CD4-positive, alpha-beta memory T cell (primary cell): ENCODE measurements at regions of chr1 and their contacts with region 1.

Region 1: DNA sequence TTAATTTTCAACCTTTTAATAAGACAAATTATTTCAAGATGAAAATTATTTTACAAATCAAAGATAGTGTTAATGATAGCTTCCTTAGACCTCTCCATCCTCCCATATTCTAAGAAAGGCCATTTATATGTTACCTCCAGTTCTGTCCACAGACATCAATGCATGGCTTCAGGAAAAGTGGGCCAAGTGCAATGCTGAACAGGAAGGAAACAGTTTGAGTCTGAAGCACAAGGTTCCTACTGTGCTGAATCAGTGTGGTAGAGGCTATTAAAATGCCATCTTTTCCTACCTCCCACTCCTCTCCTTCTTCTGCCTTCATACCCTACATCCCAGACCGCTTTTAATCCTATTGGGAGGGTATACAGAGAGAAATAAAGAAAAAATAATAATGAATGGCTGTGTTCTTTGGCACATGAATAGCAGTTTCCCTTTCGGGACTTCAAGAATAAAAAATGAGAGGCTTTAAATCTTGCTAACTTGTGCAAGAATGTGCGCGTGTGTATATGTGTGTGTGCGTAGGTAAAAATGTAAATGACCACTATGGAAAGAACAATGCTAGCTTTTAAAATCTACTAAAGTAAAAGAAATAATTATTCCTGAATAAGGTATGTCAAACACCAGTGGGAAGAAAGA is 62.6 kb upstream of the C1orf105 start:
- DNase-seq: no peak
- H3K4me3 ChIP-seq: no peak overlapping the region
- H3K4me3 Mint-ChIP-seq: peak overlapping the region; percentile 62 to 84 (median 74)
- H3K27ac ChIP-seq: peak overlapping the region; percentile 56
- H3K27ac Mint-ChIP-seq: peak overlapping the region in 6 of 7 donors; percentile 73 to 95 (median 90)
- H3K4me1 ChIP-seq: peaks cover 66% of the 10 kb centered on the region
- H3K4me1 Mint-ChIP-seq: peaks cover 22 to 58% (median 46%) of the 10 kb centered on the region in 4 donors
- H3K27me3 ChIP-seq: no peaks in the 10 kb centered on the region
- H3K27me3 Mint-ChIP-seq: no peaks in the 10 kb centered on the region

Region 2: DNA sequence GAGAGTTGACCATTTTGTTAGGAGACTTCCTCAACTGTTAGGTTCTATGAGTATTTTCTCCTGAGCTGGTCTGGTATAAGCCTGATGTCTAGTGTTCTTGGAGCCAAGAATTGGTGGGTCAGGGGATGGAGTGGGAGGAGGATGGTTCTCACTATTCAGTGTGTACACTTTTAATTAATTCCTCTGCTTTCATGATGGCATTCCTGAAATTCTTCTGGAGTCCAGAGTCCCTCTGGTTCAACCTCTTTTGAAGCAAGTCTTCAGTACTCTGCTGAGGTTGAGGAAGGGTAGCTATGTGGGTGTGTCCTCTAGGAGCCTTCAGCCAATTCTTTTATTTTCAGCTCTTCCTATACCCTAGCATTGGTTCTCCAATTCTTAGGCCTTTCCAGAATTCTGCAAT is 367.5 kb before region 1 on chr1:
- CTCF ChIA-PET with region 1: no interaction called
- POLR2A ChIA-PET with region 1: no interaction called
- intact Hi-C with region 1: no loop called
- DNase-seq: no peak
- H3K4me3 ChIP-seq: no peak overlapping the region
- H3K4me3 Mint-ChIP-seq: no peak overlapping the region
- H3K27ac ChIP-seq: no peak overlapping the region
- H3K27ac Mint-ChIP-seq: no peak overlapping the region
- H3K4me1 ChIP-seq: no peaks in the 10 kb centered on the region
- H3K4me1 Mint-ChIP-seq: no peaks in the 10 kb centered on the region
- H3K27me3 ChIP-seq: no peaks in the 10 kb centered on the region
- H3K27me3 Mint-ChIP-seq: no peaks in the 10 kb centered on the region

Region 3: DNA sequence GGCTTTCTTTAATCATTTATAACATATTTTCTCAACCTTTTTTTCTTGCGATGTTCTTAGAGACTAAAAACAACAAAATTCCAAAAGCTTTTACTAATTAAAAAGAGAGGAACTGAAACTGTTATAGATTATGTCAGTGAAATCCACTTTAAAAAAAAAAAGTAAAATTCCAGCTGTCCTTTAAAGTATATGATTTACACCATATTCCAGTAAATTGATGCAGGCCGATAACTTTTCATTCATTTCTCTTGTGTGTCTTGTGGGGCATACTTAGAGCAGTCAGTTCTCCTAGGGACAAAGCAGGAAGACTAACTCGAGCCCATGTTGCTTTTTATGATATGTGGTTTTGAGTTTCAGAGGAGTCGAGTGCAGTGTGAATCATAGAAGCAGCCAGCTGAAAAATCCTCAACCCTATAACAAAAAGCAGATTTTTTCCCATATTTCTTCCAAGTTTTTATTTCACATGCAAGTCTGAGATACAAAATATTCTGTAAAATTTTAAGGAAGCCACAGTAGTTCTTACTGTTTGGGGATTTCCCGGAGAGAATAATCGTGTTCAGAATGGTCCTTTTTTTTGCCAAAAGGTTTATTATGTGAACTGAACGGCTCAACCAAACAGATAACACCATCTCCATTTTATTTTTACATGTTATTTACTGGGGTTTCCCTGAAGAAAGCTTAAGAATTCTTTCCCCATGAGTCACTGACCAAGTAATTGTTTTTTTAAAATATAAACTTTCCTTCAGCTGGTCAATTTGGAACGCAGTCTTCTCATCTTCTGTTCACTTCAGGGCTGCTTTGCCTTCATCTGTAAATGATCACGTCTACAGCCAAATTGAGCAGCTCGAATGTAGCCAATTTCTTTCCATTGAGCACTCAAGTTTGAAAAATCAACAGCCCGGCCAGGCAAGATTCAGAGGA is 14.4 kb before region 1 on chr1:
- CTCF ChIA-PET with region 1: interaction called, 4 read pairs
- POLR2A ChIA-PET with region 1: interaction called, 4 read pairs
- intact Hi-C with region 1: loop called (anchors 2 kb)
- DNase-seq: no peak
- H3K4me3 ChIP-seq: no peak overlapping the region
- H3K4me3 Mint-ChIP-seq: peak overlapping the region in 4 of 8 donors; percentile 1 to 55 (median 29)
- H3K27ac ChIP-seq: no peak overlapping the region
- H3K27ac Mint-ChIP-seq: peak overlapping the region in 3 of 7 donors; percentile 14 to 27 (median 20)
- H3K4me1 ChIP-seq: peaks cover 16% of the 10 kb centered on the region
- H3K4me1 Mint-ChIP-seq: peaks cover 9 to 45% (median 19%) of the 10 kb centered on the region in 4 donors
- H3K27me3 ChIP-seq: no peaks in the 10 kb centered on the region
- H3K27me3 Mint-ChIP-seq: no peaks in the 10 kb centered on the region

Region 4: DNA sequence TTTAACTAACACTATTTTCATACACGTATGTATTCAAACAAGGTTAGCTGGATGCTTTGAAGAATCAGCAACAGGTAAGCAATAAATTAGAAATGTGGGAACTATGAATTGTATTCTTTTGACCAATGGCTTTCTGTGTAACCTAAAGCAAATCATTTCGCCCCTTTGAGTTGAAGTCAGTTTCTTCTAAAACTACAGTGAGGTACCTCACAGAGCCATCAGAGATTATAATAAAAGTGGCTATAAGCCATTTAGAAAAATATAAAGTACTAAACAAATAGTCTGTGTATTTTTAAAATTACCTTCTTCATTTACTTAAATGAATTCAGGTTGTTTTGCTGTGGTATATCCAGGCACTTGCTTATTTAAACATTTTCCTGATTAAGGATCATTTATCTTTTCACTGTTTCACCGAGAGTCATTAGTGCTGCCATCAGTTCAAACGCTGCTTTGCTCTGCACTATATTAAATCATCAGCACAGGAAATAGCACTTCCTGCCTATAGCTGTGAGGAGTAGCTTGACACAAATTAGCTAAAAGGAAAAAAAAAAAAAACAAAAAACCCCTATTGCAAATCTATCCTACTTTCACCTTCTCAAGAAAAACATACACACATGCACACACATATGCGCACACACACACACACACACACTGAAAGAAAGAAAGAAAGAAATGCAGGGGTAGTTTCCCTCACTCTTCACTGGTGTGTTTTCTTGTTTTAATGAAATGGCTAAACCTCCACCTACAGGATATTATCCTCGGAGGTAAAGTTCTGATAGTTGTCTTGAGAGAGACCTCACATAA is 22.8 kb after region 1 on chr1:
- CTCF ChIA-PET with region 1: interaction called, 17 read pairs
- POLR2A ChIA-PET with region 1: interaction called, 24 read pairs
- intact Hi-C with region 1: loop called (anchors 1 kb)
- DNase-seq: peak; percentile 53 to 80 (median 72)
- H3K4me3 ChIP-seq: peak overlapping the region in 1 of 2 donors; percentile 22
- H3K4me3 Mint-ChIP-seq: peak overlapping the region; percentile 65 to 91 (median 77)
- H3K27ac ChIP-seq: peak overlapping the region; percentile 54
- H3K27ac Mint-ChIP-seq: peak overlapping the region; percentile 80 to 97 (median 91)
- H3K4me1 ChIP-seq: peaks cover 31% of the 10 kb centered on the region
- H3K4me1 Mint-ChIP-seq: peaks cover 17 to 39% (median 29%) of the 10 kb centered on the region in 4 donors
- H3K27me3 ChIP-seq: no peaks in the 10 kb centered on the region
- H3K27me3 Mint-ChIP-seq: no peaks in the 10 kb centered on the region

Region 5: GRCh38 chr1:172476218-172476811 is 118.4 kb after region 1 on chr1:
- CTCF ChIA-PET with region 1: no interaction called
- POLR2A ChIA-PET with region 1: no interaction called
- intact Hi-C with region 1: no loop called
- DNase-seq: no peak
- H3K4me3 ChIP-seq: no peak overlapping the region
- H3K4me3 Mint-ChIP-seq: no peak overlapping the region
- H3K27ac ChIP-seq: no peak overlapping the region
- H3K27ac Mint-ChIP-seq: no peak overlapping the region
- H3K4me1 ChIP-seq: no peaks in the 10 kb centered on the region
- H3K4me1 Mint-ChIP-seq: peaks cover 0 to 6% (median 4%) of the 10 kb centered on the region in 4 donors
- H3K27me3 ChIP-seq: no peaks in the 10 kb centered on the region
- H3K27me3 Mint-ChIP-seq: peaks cover 0 to 6% of the 10 kb centered on the region in 2 donors